ENCODE measurements at regions of chr19 and their contacts with region 1.

Region 1: DNA sequence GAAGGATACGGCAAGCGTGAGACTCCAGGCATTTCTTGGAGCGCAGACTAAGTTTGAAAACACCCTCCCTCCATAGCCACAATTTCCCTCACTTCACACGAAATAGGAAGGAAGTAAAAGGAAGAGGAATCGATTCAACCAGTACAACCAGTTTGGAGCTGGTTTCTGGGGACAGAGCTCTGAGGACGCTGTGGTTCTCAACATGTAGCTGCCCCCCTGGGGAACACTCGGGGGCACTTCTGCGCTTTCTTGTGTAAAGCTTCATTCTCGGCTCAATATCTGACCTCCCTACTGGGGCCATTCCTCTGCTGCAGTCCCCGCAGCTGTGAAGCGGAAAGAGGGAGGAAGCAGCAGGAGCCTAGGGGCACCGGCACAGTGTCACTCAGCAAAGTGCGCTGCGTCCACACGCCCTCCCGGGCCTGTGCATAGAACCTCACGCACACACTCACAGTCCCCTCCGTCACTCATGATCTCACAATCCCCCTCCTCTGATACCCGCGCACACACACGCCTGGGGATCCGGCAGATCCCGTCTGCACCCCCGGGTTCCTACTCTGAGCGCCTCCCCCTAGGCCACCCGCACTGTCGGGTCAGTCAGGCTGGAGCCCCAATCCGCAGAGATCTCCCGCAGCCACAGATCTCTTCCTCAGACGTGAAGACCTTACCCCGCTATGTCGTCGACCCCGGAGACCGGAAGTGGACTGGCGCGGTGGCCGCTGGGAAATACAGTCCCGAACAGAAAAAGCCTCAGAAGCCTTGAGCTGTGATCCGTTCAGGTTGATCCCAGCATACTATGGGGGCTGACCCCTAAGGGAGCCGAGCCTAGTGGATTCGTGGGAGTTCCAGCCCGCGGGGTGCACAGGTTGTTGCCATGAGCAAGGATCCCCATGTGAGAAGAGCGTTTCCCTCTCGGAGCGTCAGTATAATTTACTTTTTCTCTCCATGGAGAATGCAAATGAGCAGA is at the start of gene ZNF780A:
- DNase-seq: peak; percentile 59 to 83 (median 81)
- ATAC-seq: peak; percentile 94
- H3K4me3 ChIP-seq: peak within 1 kb of the TSS; percentile 94
- H3K4me3 Mint-ChIP-seq: peak within 1 kb of the TSS; percentile 93 to 100 (median 100)
- H3K27ac ChIP-seq: peak within 1 kb of the TSS; percentile 95
- H3K27ac Mint-ChIP-seq: peak within 1 kb of the TSS; percentile 99 to 100 (median 100)
- H3K4me1 ChIP-seq: peaks cover 16 to 18% of the 10 kb centered on the region in 2 donors
- H3K4me1 Mint-ChIP-seq: peaks cover 33 to 49% (median 44%) of the 10 kb centered on the region in 7 donors
- H3K27me3 ChIP-seq: no peaks in the 10 kb centered on the region
- H3K27me3 Mint-ChIP-seq: peaks cover 8 to 11% (median 9%) of the 10 kb centered on the region in 5 donors
- total RNA-seq, gene ZNF780A: 13.9 to 49.5 (median 22.1) TPM

Region 2: GRCh38 chr19:39824143-39825092 is 266.1 kb before region 1 on chr19:
- CTCF ChIA-PET with region 1: no interaction called
- POLR2A ChIA-PET with region 1: no interaction called
- intact Hi-C with region 1: loop called in 1 of 2 experiments (anchors 1 kb)
- DNase-seq: peak; percentile 55 to 92 (median 86)
- ATAC-seq: peak; percentile 98
- H3K4me3 ChIP-seq: peak overlapping the region; percentile 85
- H3K4me3 Mint-ChIP-seq: no peak overlapping the region
- H3K27ac ChIP-seq: peak overlapping the region; percentile 72
- H3K27ac Mint-ChIP-seq: no peak overlapping the region
- H3K4me1 ChIP-seq: peaks cover 14 to 19% of the 10 kb centered on the region in 2 donors
- H3K4me1 Mint-ChIP-seq: peaks cover 0 to 19% (median 10%) of the 10 kb centered on the region in 7 donors
- H3K27me3 ChIP-seq: no peaks in the 10 kb centered on the region
- H3K27me3 Mint-ChIP-seq: no peaks in the 10 kb centered on the region

Region 3: GRCh38 chr19:40055832-40056504 is 34.6 kb before region 1 on chr19 and contains the start of gene ZNF780B:
- CTCF ChIA-PET with region 1: no interaction called
- POLR2A ChIA-PET with region 1: interaction called, 12 read pairs
- intact Hi-C with region 1: loop called (anchors 1 to 5 kb)
- DNase-seq: peak; percentile 33 to 79 (median 76)
- ATAC-seq: peak; percentile 94
- H3K4me3 ChIP-seq: peak within 1 kb of the TSS; percentile 81
- H3K4me3 Mint-ChIP-seq: peak within 1 kb of the TSS; percentile 97 to 100 (median 99)
- H3K27ac ChIP-seq: peak within 1 kb of the TSS; percentile 89
- H3K27ac Mint-ChIP-seq: peak within 1 kb of the TSS; percentile 89 to 99 (median 96)
- H3K4me1 ChIP-seq: peaks cover 12% of the 10 kb centered on the region in 2 donors
- H3K4me1 Mint-ChIP-seq: peaks cover 31 to 62% (median 54%) of the 10 kb centered on the region in 7 donors
- H3K27me3 ChIP-seq: no peaks in the 10 kb centered on the region
- H3K27me3 Mint-ChIP-seq: peaks cover 0 to 14% (median 6%) of the 10 kb centered on the region in 5 donors
- total RNA-seq, gene ZNF780B: 22.7 to 85.2 (median 35.2) TPM

Measured in naive thymus-derived CD4-positive, alpha-beta T cell (primary cell).